Activated T-helper 1 cell treated with anti-CD3 and anti-CD28 coated beads, Interleukin-12 subunit alpha, Interleukin-12 subunit beta, Interleukin-2, Interleukin-4 antibody, amounts not matched to agents 30 ng/mL and 10 ng/mL and 1 ng/mL, durations not matched to agents 14 hours and 24 hours and 36 hours (primary cell): ENCODE measurements at regions of chr10 and their contacts with region 1.

Region 1: GRCh38 chr10:88270871-88271713 is 312.0 kb downstream of the RNLS start:
- DNase-seq: peak; percentile 63
- H3K4me3 Mint-ChIP-seq: peak overlapping the region; percentile 36
- H3K27ac Mint-ChIP-seq: peak overlapping the region; percentile 86
- H3K4me1 Mint-ChIP-seq: peaks cover 59% of the 10 kb centered on the region
- H3K27me3 Mint-ChIP-seq: peaks cover 3% of the 10 kb centered on the region

Region 2: DNA sequence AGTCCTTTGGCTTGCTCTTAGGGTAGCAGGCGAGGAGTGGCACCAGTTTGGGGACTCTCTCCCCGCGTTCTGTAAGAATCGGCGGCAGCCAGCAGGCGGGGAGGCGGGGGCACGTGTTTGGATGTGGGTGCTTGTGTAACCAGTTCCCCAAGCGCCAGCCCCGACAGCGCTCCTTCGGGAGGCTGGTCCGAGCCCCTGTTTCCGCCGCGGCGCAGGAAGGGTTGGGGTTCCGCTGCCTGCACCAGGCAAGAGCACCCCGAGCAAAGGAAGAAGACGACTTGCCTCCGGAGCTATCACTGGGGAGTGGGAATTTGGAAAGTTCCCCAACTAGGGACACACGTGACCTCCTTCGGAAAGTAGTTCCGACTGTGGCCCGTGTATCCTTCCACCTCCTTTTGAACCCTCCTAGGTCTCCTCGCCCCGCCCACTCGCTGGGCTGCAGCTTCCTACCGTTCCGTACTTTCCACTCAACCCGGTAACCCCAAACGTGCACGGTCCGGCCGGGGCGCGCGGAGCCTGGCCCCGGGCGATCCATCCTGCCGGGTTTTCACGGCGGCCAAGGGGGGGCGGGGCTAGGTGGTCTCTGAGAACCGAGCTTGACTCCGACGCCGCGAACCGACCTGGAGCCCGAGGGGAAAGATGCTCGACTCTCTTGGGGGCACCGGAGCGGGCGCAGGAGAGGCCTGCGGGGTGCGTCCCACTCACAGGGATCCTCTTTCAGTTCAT is 409.0 kb before region 1 on chr10:
- intact Hi-C with region 1: loop called (anchors 1 kb)
- DNase-seq: peak; percentile 91
- H3K4me3 Mint-ChIP-seq: peak overlapping the region; percentile 94
- H3K27ac Mint-ChIP-seq: peak overlapping the region; percentile 92
- H3K4me1 Mint-ChIP-seq: peaks cover 52% of the 10 kb centered on the region
- H3K27me3 Mint-ChIP-seq: peaks cover 5% of the 10 kb centered on the region

Region 3: DNA sequence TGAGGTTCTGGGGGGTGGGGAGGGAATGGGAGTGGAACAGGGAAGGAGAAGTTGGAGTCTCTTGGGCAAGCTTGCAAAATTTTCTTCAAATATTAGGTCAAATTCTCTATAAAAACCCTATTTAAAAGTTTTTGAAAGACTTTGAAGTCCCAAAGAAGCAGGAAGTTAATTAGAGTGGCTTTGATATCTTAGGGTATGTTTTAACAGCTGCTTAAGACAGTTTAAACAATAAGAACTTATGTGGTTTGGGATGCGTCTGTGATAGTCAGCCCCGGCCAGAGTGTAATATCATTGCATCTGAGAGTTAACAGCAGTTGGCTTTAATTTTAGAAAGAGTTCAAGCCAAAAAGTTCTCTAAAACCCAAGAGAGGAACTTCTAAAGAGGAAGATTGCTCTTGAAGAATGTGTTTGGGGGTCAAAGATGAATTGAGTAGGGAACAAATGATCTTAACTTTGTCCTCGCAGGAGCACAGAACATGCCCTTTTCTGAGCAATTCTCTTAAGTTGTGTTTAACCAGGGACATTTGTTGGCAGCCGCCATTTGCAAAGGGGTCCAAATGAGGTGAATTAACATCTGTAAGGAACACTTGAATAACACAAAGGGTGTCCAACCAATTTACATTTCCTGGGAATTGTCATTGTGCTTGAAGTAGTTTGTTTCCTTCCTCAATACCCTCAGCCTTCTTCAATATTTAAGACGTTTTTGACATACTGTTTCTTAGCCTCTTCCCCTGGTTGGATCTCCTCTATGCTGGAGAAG is 225.3 kb before region 1 on chr10:
- intact Hi-C with region 1: no loop called
- DNase-seq: no peak
- H3K4me3 Mint-ChIP-seq: no peak overlapping the region
- H3K27ac Mint-ChIP-seq: no peak overlapping the region
- H3K4me1 Mint-ChIP-seq: peaks cover 5% of the 10 kb centered on the region
- H3K27me3 Mint-ChIP-seq: peaks cover 10% of the 10 kb centered on the region

Region 4: GRCh38 chr10:88117869-88118632 is 153.0 kb before region 1 on chr10:
- intact Hi-C with region 1: loop called (anchors 1 kb)
- DNase-seq: no peak
- H3K4me3 Mint-ChIP-seq: no peak overlapping the region
- H3K27ac Mint-ChIP-seq: no peak overlapping the region
- H3K4me1 Mint-ChIP-seq: peaks cover 18% of the 10 kb centered on the region
- H3K27me3 Mint-ChIP-seq: peaks cover 3% of the 10 kb centered on the region

Region 5: GRCh38 chr10:88212069-88212468 is 59.0 kb before region 1 on chr10:
- intact Hi-C with region 1: loop called (anchors 1 kb)
- DNase-seq: no peak
- H3K4me3 Mint-ChIP-seq: no peak overlapping the region
- H3K27ac Mint-ChIP-seq: no peak overlapping the region
- H3K4me1 Mint-ChIP-seq: peaks cover 7% of the 10 kb centered on the region
- H3K27me3 Mint-ChIP-seq: peaks cover 4% of the 10 kb centered on the region

Region 6: GRCh38 chr10:88386821-88387773 is 116.0 kb after region 1 on chr10:
- intact Hi-C with region 1: loop called (anchors 1 kb)
- DNase-seq: no peak
- H3K4me3 Mint-ChIP-seq: no peak overlapping the region
- H3K27ac Mint-ChIP-seq: no peak overlapping the region
- H3K4me1 Mint-ChIP-seq: peaks cover 16% of the 10 kb centered on the region
- H3K27me3 Mint-ChIP-seq: no peaks in the 10 kb centered on the region

Region 7: DNA sequence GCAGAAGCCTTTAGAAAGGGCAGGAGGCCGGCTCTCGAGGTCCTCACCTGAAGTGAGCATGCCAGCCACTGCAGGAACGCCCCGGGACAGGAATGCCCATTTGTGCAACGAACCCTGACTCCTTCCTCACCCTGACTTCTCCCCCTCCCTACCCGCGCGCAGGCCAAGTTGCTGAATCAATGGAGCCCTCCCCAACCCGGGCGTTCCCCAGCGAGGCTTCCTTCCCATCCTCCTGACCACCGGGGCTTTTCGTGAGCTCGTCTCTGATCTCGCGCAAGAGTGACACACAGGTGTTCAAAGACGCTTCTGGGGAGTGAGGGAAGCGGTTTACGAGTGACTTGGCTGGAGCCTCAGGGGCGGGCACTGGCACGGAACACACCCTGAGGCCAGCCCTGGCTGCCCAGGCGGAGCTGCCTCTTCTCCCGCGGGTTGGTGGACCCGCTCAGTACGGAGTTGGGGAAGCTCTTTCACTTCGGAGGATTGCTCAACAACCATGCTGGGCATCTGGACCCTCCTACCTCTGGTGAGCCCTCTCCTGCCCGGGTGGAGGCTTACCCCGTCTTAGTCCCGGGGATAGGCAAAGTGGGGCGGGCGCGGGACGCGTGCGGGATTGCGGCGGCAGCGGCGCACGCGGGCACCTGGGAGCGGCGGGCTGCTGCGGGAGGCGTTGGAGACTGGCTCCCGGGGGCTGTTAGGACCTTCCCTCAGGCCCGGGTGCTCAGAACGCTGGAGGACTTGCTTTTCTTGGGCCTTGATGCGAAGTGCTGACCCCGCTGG is 719.5 kb after region 1 on chr10 and contains the start of gene FAS:
- intact Hi-C with region 1: loop called (anchors 10 kb)
- DNase-seq: peak; percentile 81
- H3K4me3 Mint-ChIP-seq: peak within 1 kb of the TSS; percentile 97
- H3K27ac Mint-ChIP-seq: peak within 1 kb of the TSS; percentile 97
- H3K4me1 Mint-ChIP-seq: peaks cover 75% of the 10 kb centered on the region
- H3K27me3 Mint-ChIP-seq: no peaks in the 10 kb centered on the region
- total RNA-seq, gene FAS: 36.4 and 38.6 TPM in 2 replicates